ENCODE measurements at regions of chr19 and their contacts with region 1.

Region 1: DNA sequence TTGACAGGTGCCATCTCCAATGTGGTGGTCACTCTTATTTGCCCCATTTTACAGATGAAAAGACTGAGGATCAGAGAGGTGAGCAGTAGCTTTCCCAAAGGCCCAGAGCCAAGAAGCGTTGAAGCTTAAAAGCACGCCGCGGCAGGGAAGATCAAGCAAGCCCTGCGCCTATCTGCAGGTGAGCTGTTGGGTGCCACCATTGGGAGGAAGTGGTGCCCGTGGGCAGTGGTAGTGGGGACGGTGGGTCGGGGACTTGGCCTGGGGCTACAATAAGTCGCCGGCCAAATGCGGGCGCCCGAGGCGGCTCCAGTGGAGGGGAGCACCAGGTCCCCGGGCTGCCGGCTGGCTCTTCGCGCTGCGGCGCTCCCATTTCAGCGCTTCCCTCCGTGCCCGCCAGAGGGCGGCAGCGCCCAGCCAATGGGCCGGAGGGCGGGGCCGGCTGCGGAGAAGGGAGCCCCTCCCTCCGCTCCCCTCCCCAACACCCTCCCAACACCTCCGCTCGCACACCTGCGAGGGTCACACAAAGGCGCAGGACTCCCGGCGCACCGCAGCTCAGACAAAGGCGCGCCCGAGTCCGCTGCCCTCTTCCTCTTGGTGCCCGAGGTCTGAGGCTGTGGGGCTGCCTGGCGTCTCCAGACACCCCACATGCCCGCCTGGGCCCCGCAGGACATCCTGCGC is 744 bp upstream of the POU2F2 start:
- DNase-seq: peak in 9 of 10 donors; percentile 53 to 89 (median 65)
- H3K4me3 ChIP-seq: peak overlapping the region; percentile 23 to 67 (median 48)
- H3K27ac ChIP-seq: peak overlapping the region in 13 of 59 donors; percentile 5 to 63 (median 27)
- H3K27me3 ChIP-seq: peaks cover 0 to 21% (median 5%) of the 10 kb centered on the region in 45 donors
- CTCF ChIP-seq: peak; percentile 74 to 99 (median 98)

Region 2: DNA sequence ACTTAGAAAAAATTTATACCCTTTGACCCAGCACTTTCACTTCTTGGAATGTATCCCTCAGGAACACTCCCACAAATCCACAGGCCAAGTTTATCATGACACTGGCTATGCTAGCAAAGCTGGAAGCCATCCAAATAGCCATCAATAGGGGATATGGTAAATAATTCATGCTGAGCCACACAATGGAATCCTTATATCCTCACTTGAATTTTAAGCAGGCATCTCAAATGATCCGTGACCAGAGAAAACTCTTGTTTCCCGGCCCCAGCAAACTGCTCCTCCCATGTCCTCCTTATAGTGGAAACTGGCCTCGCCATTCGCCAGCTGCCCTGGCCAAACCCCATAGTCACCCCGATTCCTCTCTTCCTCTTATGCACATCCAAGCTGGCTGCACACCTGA is 100.6 kb before region 1 on chr19:
- intact Hi-C with region 1: no loop called
- DNase-seq: no peak
- H3K4me3 ChIP-seq: no peak overlapping the region
- H3K27ac ChIP-seq: peak overlapping the region in 8 of 59 donors; percentile 1 to 37 (median 18)
- H3K27me3 ChIP-seq: no peaks in the 10 kb centered on the region
- CTCF ChIP-seq: no peak

Region 3: DNA sequence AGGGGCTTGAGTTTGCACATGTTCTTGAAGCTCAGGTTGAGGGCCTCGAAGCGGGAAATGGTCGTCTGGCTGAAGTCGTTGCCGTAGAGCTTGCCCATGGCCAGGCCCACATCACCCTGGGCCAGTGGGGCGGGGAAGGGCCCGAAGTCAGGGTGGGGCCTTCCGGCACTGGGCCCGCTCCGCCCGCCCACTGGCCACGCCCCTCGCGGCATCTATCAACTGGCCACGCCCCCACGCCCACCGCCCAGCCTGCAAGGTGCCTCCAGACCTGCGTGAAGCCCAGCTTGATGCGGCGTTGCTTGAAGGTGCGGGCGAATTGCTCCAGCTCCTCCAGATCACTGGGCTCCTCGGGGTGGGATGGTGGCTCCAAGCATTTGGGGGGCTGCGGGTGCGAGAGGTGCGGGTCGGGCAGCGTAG is 37.2 kb before region 1 on chr19:
- intact Hi-C with region 1: no loop called
- DNase-seq: no peak
- H3K4me3 ChIP-seq: no peak overlapping the region
- H3K27ac ChIP-seq: no peak overlapping the region
- H3K27me3 ChIP-seq: peaks cover 0 to 12% (median 0%) of the 10 kb centered on the region in 45 donors
- CTCF ChIP-seq: no peak

Region 4: GRCh38 chr19:42184401-42184861 is 51.4 kb after region 1 on chr19:
- intact Hi-C with region 1: loop called (anchors 1 kb)
- DNase-seq: peak; percentile 71 to 86 (median 80)
- H3K4me3 ChIP-seq: no peak overlapping the region
- H3K27ac ChIP-seq: peak overlapping the region in 40 of 59 donors; percentile 5 to 85 (median 54)
- H3K27me3 ChIP-seq: peaks cover 0 to 25% (median 2%) of the 10 kb centered on the region in 45 donors
- CTCF ChIP-seq: peak; percentile 76 to 97 (median 94)

Region 5: GRCh38 chr19:42199440-42200115 is 66.6 kb after region 1 on chr19:
- intact Hi-C with region 1: no loop called
- DNase-seq: no peak
- H3K4me3 ChIP-seq: no peak overlapping the region
- H3K27ac ChIP-seq: peak overlapping the region in 8 of 59 donors; percentile 12 to 69 (median 46)
- H3K27me3 ChIP-seq: no peaks in the 10 kb centered on the region
- CTCF ChIP-seq: no peak